ENCODE measurements at regions of chr7 and their contacts with region 1.

Region 1: GRCh38 chr7:115276791-115277190 is 354.9 kb downstream of the MDFIC start:
- DNase-seq: no peak
- H3K4me3 ChIP-seq: no peak overlapping the region
- CTCF ChIP-seq: no peak
- POLR2A ChIP-seq: no peak

Region 2: DNA sequence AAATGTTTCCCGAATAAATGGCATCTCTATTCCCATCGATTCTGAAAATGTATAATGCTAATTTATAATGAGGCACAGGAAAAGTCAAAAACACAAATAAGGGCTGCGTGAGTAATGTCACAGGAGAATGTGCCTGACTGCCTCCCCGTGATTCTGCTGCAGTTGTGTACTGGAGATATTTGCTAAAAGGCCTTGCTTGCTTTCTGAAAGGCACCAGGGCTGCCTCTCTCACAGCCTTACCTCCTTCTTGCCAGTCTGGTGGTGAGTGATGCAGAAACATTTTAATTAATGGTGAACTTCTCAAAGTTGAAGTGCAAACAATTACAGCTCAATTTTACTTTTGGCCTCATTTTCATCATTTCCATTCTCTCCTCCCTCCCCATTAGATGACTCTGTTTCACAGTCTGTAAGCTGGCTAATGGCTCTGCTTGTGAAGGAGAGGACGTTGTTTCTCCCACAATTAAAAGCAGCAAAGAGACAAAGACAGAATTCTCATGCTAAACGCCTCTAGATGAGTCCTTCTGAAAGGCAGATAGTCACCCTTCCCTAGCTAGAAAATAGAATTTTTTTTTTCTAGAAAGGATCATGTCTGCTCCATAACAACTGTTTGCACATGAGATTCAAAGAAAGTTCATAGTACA is 22.7 kb after region 1 on chr7:
- intact Hi-C with region 1: loop called (anchors 1 kb)
- DNase-seq: no peak
- H3K4me3 ChIP-seq: no peak overlapping the region
- CTCF ChIP-seq: no peak
- POLR2A ChIP-seq: no peak

Region 3: GRCh38 chr7:115953592-115954255 is 676.9 kb after region 1 on chr7:
- intact Hi-C with region 1: no loop called
- DNase-seq: no peak
- H3K4me3 ChIP-seq: no peak overlapping the region
- CTCF ChIP-seq: no peak
- POLR2A ChIP-seq: no peak